ENCODE measurements at regions of chr3 and their contacts with region 1.

Region 1: DNA sequence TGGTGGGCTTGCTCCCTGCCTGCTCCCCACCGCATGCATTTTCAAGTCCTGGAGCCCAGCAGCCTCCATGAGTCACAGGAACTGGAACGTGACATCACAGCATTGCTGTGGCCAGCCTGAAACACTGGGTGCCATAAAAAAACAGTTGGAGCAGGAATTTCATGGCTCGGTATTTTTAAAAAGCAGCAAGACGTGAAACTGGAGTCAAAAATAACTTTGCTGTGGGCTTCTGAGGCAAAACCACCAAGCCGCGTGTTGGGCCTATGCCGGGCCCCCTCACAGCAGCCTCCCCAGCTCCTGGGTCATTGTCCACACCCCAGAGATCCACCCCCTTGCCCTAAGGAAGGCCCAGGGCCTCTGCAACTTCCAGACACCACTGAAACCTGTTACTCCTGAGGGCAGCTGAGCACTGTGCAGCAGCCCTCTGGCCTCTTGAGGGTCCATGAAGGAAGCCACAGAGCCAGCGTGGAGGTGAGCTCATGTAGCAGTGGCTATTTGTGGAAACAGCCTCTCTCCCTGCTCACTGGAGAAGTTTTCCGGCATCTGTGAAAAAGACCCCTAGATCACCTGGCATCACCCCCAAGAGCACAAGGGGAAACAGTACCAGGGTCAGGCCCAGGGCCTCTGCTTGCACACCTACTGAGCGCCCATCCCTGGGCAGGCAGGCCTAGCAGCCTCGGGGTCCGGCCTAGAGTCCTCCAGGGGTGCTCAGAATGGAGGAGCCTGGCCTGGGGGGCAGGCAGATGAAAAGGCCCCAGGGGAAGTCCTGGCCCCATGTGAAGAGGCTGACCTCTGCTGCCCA is 34.0 kb upstream of the DUSP7 start:
- DNase-seq: no peak
- H3K4me3 ChIP-seq: no peak overlapping the region
- H3K27ac ChIP-seq: no peak overlapping the region
- H3K4me1 ChIP-seq: peaks cover 0 to 2% (median 0%) of the 10 kb centered on the region in 4 experiments; a peak in 2 of 7 replicates
- H3K27me3 ChIP-seq: no peaks in the 10 kb centered on the region
- CTCF ChIP-seq: no peak
- EP300 ChIP-seq: no peak
- POLR2A ChIP-seq: no peak
- RAD21 ChIP-seq: no peak

Region 2: DNA sequence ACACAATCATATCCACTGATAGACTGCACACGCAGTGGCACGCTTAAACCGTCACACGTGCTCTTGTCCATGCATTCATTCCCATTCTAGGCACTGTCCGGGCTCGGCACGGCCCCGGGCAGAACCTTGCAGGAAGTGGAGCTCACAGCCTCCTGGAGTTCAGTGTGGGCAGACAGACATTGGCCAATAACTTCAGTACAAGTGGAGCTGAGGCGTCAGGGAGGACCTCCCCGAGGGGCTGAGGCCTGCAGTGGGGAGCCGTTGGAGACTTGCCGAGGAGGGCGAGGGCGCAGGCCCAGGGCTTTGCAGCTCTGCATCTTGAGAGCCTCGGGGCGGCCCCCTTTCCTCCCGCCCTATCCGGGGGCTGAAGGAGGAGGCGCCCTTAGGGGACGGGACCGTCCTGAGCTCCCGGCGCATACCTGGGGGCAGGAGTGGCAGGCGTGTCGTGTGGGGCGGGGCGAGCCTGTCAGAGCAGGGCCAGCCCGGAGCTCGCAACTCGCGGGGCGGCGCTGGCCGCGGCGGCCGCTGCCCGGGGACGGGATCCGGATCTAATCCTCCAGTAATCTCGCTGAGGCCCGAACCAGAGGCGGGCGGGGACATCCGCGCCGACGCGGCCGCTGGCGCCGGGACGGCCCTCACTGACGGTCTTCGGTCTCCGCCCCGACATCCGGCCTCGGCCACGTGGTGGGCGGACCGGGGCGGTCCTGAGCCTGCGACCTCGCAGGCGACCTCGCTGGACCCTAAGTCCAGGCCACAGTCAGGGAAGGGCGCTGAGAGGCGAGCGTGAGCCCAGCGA is 107.4 kb before region 1 on chr3 and contains the start of gene ACY1:
- CTCF ChIA-PET with region 1: no interaction called
- POLR2A ChIA-PET with region 1: no interaction called
- DNase-seq: peak in 1 of 2 experiments; percentile 89
- H3K4me3 ChIP-seq: peak within 1 kb of the TSS; percentile 53 to 63 (median 56)
- H3K27ac ChIP-seq: peak within 1 kb of the TSS; percentile 45; the same call in 1 of the 2 replicates
- H3K4me1 ChIP-seq: peaks cover 0 to 12% (median 9%) of the 10 kb centered on the region in 4 experiments; a peak in 6 of 7 replicates
- H3K27me3 ChIP-seq: no peaks in the 10 kb centered on the region
- CTCF ChIP-seq: no peak
- EP300 ChIP-seq: no peak
- POLR2A ChIP-seq: peak in 1 of 2 experiments; percentile 86; a peak in 2 of 3 replicates
- RAD21 ChIP-seq: no peak
- total RNA-seq, gene ACY1: 45.5 and 48.3 TPM in 2 replicates

Region 3: DNA sequence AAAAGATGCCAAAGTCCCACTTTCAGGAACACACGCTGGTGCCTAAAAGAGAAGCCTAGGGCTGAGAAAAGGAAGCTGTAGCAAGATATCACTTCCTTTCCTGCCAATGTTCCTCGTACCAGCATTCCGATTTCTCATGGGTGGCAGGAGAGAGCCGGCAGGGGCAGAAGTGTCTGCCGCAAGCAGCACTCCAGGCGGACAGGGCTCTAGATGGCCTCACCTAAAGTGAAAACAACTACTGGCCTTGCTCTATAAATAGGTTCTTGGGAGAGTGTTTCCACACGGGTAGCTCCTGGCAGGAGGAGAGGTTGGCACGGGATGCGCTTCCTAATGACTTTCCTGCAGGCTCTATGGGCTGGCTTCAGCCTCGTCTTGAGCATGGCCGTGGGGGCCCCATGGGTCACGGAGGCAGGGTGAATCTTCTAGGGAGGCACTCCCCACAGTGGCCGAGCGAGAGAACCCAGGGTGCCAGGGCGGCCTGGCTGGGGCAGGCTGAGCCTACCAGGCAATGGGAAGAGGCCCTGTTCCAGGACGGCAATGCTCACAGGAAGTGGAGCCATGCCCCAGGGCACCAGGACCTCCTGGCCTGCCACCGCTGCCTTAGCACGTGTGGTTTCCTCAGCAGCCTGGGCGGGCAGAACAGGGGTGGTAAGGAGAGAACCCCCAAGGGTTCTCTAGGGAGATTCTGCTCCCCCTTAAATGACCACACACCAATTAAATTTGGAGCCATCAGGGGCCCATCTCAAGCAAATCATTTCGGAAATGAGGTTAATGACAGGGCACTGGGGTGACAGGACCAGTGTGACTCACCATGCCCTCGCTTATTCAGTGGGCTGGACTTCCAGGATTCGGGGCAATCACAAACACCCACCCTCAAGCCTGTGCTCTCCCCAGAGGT is 19.4 kb before region 1 on chr3:
- CTCF ChIA-PET with region 1: interaction called, 15 read pairs
- POLR2A ChIA-PET with region 1: interaction called, 3 read pairs
- DNase-seq: no peak
- H3K4me3 ChIP-seq: no peak overlapping the region
- H3K27ac ChIP-seq: no peak overlapping the region
- H3K4me1 ChIP-seq: no peaks in the 10 kb centered on the region; a peak in 2 of 7 replicates
- H3K27me3 ChIP-seq: no peaks in the 10 kb centered on the region; a peak in 1 of 7 replicates
- CTCF ChIP-seq: no peak
- EP300 ChIP-seq: no peak
- POLR2A ChIP-seq: no peak
- RAD21 ChIP-seq: no peak

Region 4: GRCh38 chr3:52076896-52077780 is 13.2 kb before region 1 on chr3:
- CTCF ChIA-PET with region 1: interaction called, 15 read pairs
- POLR2A ChIA-PET with region 1: interaction called, 3 read pairs
- DNase-seq: no peak
- H3K4me3 ChIP-seq: no peak overlapping the region
- H3K27ac ChIP-seq: no peak overlapping the region
- H3K4me1 ChIP-seq: no peaks in the 10 kb centered on the region; a peak in 2 of 7 replicates
- H3K27me3 ChIP-seq: no peaks in the 10 kb centered on the region; a peak in 2 of 7 replicates
- CTCF ChIP-seq: no peak
- EP300 ChIP-seq: no peak
- POLR2A ChIP-seq: no peak
- RAD21 ChIP-seq: no peak

Region 5: DNA sequence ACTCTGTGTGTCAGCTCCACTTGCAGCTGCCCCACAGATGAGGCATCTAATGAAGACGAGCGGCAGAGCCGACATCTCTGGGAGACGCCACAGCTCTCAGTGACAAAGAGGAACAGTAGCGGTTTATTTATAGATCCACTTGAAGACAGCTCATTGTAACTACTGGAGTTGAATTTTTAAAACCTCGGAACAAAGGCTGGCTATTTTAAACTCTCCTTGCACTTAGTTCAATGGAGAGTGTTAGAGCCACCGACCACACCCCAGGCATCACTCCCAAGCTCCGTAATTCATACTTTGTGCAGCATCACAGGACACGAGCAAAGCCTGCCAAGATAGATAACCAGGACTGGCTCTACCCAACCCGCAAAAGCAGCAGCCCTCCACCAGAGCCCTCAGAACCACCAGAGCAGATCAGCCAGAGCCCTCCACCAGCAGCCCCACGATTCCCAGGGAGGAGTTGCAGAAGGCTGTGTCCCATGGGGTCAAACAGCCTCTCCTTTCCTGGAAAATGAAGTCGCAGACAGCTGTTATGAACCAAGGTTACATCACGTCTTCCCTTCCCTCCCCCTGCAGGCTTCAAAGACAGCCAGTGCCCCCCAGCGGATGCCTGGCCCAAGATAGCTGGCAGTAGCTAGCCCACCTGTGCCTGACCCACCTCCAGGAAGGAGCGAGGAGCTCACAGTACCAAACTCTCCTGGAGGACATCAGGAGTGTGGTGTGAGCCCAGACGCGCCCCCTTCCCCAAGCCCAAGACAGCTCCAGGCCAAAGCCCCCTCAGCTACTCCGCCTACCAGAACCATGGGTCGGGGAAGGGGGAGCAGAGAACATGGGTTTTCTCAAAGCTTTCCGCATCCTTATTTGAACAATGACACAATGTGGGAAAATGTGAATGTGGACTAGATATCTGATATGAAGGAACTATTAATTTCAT is 18.2 kb after region 1 on chr3:
- CTCF ChIA-PET with region 1: interaction called, 13 read pairs
- POLR2A ChIA-PET with region 1: interaction called, 4 read pairs
- DNase-seq: no peak
- H3K4me3 ChIP-seq: no peak overlapping the region
- H3K27ac ChIP-seq: no peak overlapping the region
- H3K4me1 ChIP-seq: no peaks in the 10 kb centered on the region
- H3K27me3 ChIP-seq: no peaks in the 10 kb centered on the region
- CTCF ChIP-seq: peak in 2 of 3 experiments; percentile 12 to 20; a peak in 1 of 4 replicates
- EP300 ChIP-seq: no peak
- POLR2A ChIP-seq: no peak
- RAD21 ChIP-seq: peak in 1 of 2 experiments; percentile 42; a peak in 3 of 4 replicates

Region 6: DNA sequence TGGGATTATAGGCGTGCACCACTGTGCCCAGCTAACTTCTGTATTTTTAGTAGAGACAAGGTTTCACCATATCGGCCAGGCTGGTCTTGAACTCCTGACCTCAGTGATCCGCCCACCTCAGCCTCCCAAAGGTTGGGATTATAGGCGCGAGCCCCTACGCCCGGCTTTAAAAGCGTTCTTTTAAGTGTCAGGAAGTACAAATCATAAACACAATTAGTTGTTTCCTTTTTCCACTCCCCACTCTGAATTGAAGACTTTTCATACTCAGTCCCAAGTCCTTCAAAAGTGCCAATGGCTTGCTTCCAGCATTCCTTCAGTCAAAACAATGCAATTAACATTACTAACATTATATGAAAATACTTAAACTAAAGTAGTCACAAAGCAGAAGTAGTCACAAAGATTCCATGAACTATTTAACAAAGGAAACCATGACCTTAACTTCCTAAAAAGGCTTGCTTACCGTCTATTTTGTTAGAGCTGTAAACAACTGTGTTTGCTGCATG is 180.0 kb after region 1 on chr3:
- CTCF ChIA-PET with region 1: no interaction called
- POLR2A ChIA-PET with region 1: no interaction called
- DNase-seq: no peak
- H3K4me3 ChIP-seq: no peak overlapping the region
- H3K27ac ChIP-seq: no peak overlapping the region
- H3K4me1 ChIP-seq: no peaks in the 10 kb centered on the region
- H3K27me3 ChIP-seq: no peaks in the 10 kb centered on the region
- CTCF ChIP-seq: no peak
- EP300 ChIP-seq: no peak
- POLR2A ChIP-seq: no peak
- RAD21 ChIP-seq: no peak

Measured in H1 (cell line).